ENCODE measurements at regions of chr11 and their contacts with region 1.

Region 1: DNA sequence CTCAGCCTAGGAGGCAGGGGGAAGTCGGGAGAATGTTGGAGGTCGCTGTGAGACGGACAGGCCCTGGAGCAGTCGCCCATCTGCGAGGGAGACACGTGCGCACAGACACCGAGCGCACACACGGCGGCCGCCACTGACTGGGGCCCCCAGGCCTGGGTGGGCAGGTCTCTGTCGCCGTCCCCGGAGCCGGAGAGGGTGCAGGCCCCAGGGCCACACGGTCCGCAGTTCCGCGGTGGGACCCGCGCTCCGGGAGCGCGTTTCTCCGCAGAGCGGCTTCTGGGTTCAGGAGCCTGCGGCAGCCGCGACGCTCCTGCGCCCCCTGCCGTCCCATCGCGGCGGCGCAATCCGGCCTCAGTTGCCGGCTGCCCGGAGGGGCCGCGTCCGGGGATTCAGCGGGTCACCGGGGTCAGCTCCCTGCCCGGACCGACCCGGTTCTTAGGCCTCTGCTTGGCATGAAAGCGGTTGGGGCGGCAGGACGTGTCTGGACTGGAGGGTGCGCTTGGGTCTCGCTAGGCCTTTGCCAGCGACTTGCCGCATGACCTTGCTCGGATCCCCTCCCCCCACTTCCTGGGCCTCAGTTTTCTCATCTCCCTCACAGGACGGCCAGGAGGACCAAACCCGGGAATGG is 31.2 kb downstream of the PDE2A start:
- DNase-seq: peak; percentile 64 to 87 (median 85)
- ATAC-seq: peak; percentile 81 to 82
- H3K4me3 ChIP-seq: peak overlapping the region; percentile 64
- H3K27ac ChIP-seq: no peak overlapping the region
- H3K4me1 ChIP-seq: peaks cover 3% of the 10 kb centered on the region
- H3K27me3 ChIP-seq: no peaks in the 10 kb centered on the region

Region 2: GRCh38 chr11:72328366-72329224 is 314.4 kb before region 1 on chr11:
- intact Hi-C with region 1: no loop called
- DNase-seq: no peak
- ATAC-seq: peak; percentile 45 to 46
- H3K4me3 ChIP-seq: no peak overlapping the region
- H3K27ac ChIP-seq: no peak overlapping the region
- H3K4me1 ChIP-seq: no peaks in the 10 kb centered on the region
- H3K27me3 ChIP-seq: no peaks in the 10 kb centered on the region

Region 3: GRCh38 chr11:72471005-72471898 is 171.7 kb before region 1 on chr11:
- intact Hi-C with region 1: loop called in 1 of 4 experiments (anchors 10 kb)
- DNase-seq: peak; percentile 60 to 77 (median 74)
- ATAC-seq: peak; percentile 80 to 86
- H3K4me3 ChIP-seq: no peak overlapping the region
- H3K27ac ChIP-seq: no peak overlapping the region
- H3K4me1 ChIP-seq: no peaks in the 10 kb centered on the region
- H3K27me3 ChIP-seq: no peaks in the 10 kb centered on the region

Region 4: GRCh38 chr11:72483412-72484186 is 159.4 kb before region 1 on chr11:
- intact Hi-C with region 1: loop called in 2 of 4 experiments (anchors 10 kb)
- DNase-seq: no peak
- ATAC-seq: peak; percentile 47 to 55
- H3K4me3 ChIP-seq: no peak overlapping the region
- H3K27ac ChIP-seq: no peak overlapping the region
- H3K4me1 ChIP-seq: no peaks in the 10 kb centered on the region
- H3K27me3 ChIP-seq: peaks cover 2% of the 10 kb centered on the region

Region 5: DNA sequence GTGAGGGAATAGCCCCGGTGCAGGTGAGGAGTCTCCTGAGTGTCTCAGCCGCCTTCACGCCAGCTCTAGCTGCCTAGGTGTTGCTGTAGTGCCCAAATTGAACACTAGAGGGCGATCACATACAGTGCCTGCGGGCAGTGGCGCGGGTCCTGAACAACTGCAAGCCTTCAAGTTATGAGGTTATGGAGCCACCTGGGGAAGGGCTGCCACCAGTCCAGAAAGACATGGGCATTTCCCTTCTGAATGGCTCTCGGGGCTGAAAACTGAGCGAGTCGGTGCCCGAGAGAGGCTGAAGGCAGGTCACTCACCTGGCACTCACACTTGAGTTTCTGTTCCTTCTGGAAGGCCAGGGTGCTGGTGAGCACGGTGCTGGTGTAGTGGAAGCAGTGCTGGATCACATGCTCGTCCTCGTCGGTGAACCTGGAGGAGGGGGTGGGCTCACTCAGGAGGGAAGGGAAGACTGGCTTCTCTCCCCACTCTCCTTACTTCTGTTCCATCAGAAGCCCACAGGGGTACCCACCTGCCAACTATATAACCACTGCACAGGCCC is 57.2 kb before region 1 on chr11:
- intact Hi-C with region 1: loop called in 2 of 4 experiments (anchors 5 kb)
- DNase-seq: peak; percentile 42 to 78 (median 77)
- ATAC-seq: peak; percentile 31 to 61
- H3K4me3 ChIP-seq: no peak overlapping the region
- H3K27ac ChIP-seq: no peak overlapping the region
- H3K4me1 ChIP-seq: no peaks in the 10 kb centered on the region
- H3K27me3 ChIP-seq: no peaks in the 10 kb centered on the region

Region 6: GRCh38 chr11:72598906-72599305 is 44.1 kb before region 1 on chr11:
- intact Hi-C with region 1: loop called in 3 of 4 experiments (anchors 1 to 5 kb)
- DNase-seq: peak; percentile 67 to 89 (median 78)
- ATAC-seq: peak; percentile 68 to 82
- H3K4me3 ChIP-seq: no peak overlapping the region
- H3K27ac ChIP-seq: no peak overlapping the region
- H3K4me1 ChIP-seq: no peaks in the 10 kb centered on the region
- H3K27me3 ChIP-seq: no peaks in the 10 kb centered on the region